Panc1 (cell line): ENCODE measurements at regions of chr22 and their contacts with region 1.

Region 1: DNA sequence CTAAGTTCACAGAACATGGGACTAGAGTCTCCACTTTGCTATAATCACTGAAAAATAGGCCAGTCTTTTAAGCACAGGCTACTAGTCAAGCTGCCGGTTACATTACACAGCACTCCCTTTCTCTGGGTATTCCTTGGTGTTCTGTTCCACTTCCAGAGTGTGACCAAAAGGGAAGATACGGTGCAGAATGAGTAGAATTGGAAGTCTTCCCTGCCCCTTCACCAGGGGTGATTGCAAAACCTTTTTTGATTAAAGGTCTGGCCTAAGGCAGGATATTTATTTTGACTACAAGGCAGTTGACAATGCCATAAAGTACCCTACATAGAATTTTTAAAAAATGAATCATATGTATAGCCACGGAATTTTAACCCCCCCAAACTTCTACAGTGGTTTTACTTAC is 59.6 kb upstream of the ADORA2A start:
- DNase-seq: no peak
- ATAC-seq: no peak
- H3K4me3 ChIP-seq: no peak overlapping the region
- H3K27ac ChIP-seq: no peak overlapping the region
- H3K4me1 ChIP-seq: no peaks in the 10 kb centered on the region
- H3K27me3 ChIP-seq: no peaks in the 10 kb centered on the region
- CTCF ChIP-seq: no peak

Region 2: DNA sequence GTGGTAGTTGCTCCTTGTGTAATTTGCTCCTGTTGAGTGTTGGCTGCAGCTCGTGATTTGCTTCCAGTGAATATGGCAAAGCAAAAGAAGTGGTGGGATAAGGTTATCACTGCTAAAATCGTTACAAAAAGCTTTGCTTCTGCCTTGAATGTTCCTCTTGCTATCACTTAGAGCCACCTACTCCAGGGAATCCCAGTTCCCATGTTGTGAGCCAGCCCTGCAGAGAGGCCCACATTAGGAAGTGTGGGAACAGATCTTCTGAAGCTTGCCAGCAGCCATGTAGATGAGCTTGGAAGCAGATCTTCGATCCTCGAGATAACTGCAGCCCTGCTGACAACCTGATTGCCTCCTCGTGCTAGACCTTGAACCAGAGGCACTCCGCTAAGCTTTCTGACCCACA is 26.2 kb before region 1 on chr22:
- CTCF ChIA-PET with region 1: no interaction called
- POLR2A ChIA-PET with region 1: interaction called, 12 read pairs
- in situ Hi-C with region 1: no loop called
- intact Hi-C with region 1: no loop called
- DNase-seq: no peak
- ATAC-seq: no peak
- H3K4me3 ChIP-seq: no peak overlapping the region
- H3K27ac ChIP-seq: no peak overlapping the region
- H3K4me1 ChIP-seq: no peaks in the 10 kb centered on the region
- H3K27me3 ChIP-seq: no peaks in the 10 kb centered on the region
- CTCF ChIP-seq: no peak

Region 3: GRCh38 chr22:24481641-24482040 is 113.8 kb after region 1 on chr22:
- CTCF ChIA-PET with region 1: no interaction called
- POLR2A ChIA-PET with region 1: interaction called, 10 read pairs
- in situ Hi-C with region 1: no loop called
- intact Hi-C with region 1: no loop called
- DNase-seq: no peak
- ATAC-seq: no peak
- H3K4me3 ChIP-seq: no peak overlapping the region
- H3K27ac ChIP-seq: no peak overlapping the region; the same call in 1 of the 2 replicates
- H3K4me1 ChIP-seq: no peaks in the 10 kb centered on the region
- H3K27me3 ChIP-seq: no peaks in the 10 kb centered on the region
- CTCF ChIP-seq: no peak